Activated CD4-positive, alpha-beta T cell treated with anti-CD3 and anti-CD28 coated beads for 36 hours (primary cell): ENCODE measurements at regions of chr10 and their contacts with region 1.

Region 1: GRCh38 chr10:88791924-88792323 is 10.6 kb upstream of the LIPM start:
- DNase-seq: peak; percentile 26
- ATAC-seq: no peak
- H3K4me3 Mint-ChIP-seq: no peak overlapping the region
- H3K27ac Mint-ChIP-seq: no peak overlapping the region
- H3K4me1 Mint-ChIP-seq: peaks cover 22% of the 10 kb centered on the region
- H3K27me3 Mint-ChIP-seq: peaks cover 7% of the 10 kb centered on the region

Region 2: GRCh38 chr10:88270871-88271713 is 520.8 kb before region 1 on chr10:
- CTCF ChIA-PET with region 1: no interaction called
- POLR2A ChIA-PET with region 1: no interaction called
- intact Hi-C with region 1: loop called in 1 of 2 experiments (anchors 10 kb)
- DNase-seq: peak; percentile 65
- ATAC-seq: peak; percentile 93
- H3K4me3 Mint-ChIP-seq: no peak overlapping the region
- H3K27ac Mint-ChIP-seq: peak overlapping the region; percentile 64
- H3K4me1 Mint-ChIP-seq: peaks cover 37% of the 10 kb centered on the region
- H3K27me3 Mint-ChIP-seq: peaks cover 3% of the 10 kb centered on the region

Region 3: GRCh38 chr10:88687853-88688467 is 104.0 kb before region 1 on chr10:
- CTCF ChIA-PET with region 1: interaction called, 3 read pairs
- POLR2A ChIA-PET with region 1: no interaction called
- intact Hi-C with region 1: loop called in 1 of 2 experiments (anchors 5 kb)
- DNase-seq: no peak
- ATAC-seq: no peak
- H3K4me3 Mint-ChIP-seq: no peak overlapping the region
- H3K27ac Mint-ChIP-seq: no peak overlapping the region
- H3K4me1 Mint-ChIP-seq: no peaks in the 10 kb centered on the region
- H3K27me3 Mint-ChIP-seq: peaks cover 8% of the 10 kb centered on the region

Region 4: DNA sequence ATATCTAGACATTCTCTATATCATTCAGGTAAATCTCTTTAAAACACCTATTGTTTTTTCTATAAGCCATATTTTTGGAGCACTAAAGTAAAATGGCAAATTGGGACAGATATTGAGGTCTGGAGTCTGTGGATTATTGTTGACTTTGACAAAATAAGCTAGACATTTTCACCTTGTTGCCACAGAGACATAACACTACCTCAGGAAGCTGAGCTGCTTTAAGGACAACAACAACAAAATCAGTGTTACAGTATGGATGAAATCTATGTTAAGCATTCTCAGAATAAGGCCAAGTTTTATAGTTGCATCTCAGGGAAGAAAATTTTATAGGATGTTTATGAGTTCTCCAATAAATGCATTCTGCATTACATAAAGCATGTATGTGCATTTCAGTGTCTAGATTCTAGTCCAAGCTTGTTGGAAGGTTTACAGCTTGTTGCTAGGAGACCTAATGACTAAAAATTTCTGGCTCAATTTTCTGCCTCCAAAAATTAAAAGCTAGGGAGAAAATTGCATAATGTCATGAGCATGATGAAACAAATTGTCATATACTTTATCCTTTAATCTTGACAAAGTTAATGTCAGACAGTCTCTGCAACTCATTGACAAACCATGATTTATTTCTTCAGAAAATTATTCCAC is 28.9 kb after region 1 on chr10:
- CTCF ChIA-PET with region 1: no interaction called
- POLR2A ChIA-PET with region 1: no interaction called
- intact Hi-C with region 1: loop called (anchors 1 to 5 kb)
- DNase-seq: no peak
- ATAC-seq: no peak
- H3K4me3 Mint-ChIP-seq: no peak overlapping the region
- H3K27ac Mint-ChIP-seq: no peak overlapping the region
- H3K4me1 Mint-ChIP-seq: peaks cover 28% of the 10 kb centered on the region
- H3K27me3 Mint-ChIP-seq: no peaks in the 10 kb centered on the region

Region 5: DNA sequence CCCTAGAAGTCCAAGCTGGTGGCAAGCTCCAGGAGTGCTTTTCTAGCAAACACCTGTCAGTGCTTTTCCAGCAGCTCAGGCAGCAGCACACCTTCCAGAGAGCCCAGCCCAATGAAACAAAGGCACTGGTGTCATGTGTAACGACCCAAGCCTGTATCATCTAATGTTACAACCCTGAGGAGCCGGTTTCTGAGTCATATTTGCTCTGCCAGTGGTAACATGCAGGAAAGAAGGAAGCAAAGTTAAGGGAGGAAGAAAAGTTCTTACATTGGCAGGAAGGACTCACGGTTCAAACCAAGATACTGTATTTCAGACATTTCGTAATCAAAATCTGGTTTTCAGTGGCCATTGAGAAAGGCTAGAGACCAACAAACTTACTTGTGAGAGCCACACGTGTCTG is 59.8 kb after region 1 on chr10 and contains the start of gene ANKRD22:
- CTCF ChIA-PET with region 1: no interaction called
- POLR2A ChIA-PET with region 1: no interaction called
- intact Hi-C with region 1: loop called in 1 of 2 experiments (anchors 2 kb)
- DNase-seq: no peak
- ATAC-seq: no peak
- H3K4me3 Mint-ChIP-seq: no peak within 1 kb of the TSS
- H3K27ac Mint-ChIP-seq: no peak within 1 kb of the TSS
- H3K4me1 Mint-ChIP-seq: peaks cover 18% of the 10 kb centered on the region
- H3K27me3 Mint-ChIP-seq: peaks cover 9% of the 10 kb centered on the region
- total RNA-seq, gene ANKRD22: 0.37 TPM

Region 6: GRCh38 chr10:88952647-88953111 is 160.8 kb after region 1 on chr10 and contains the start of gene ACTA2:
- CTCF ChIA-PET with region 1: no interaction called
- POLR2A ChIA-PET with region 1: no interaction called
- intact Hi-C with region 1: no loop called
- DNase-seq: no peak
- ATAC-seq: no peak
- H3K4me3 Mint-ChIP-seq: no peak within 1 kb of the TSS
- H3K27ac Mint-ChIP-seq: no peak within 1 kb of the TSS
- H3K4me1 Mint-ChIP-seq: no peaks in the 10 kb centered on the region
- H3K27me3 Mint-ChIP-seq: no peaks in the 10 kb centered on the region
- total RNA-seq, gene ACTA2: 8.5 to 10.2 TPM